ENCODE measurements at regions of chr12 and their contacts with region 1.

Region 1: DNA sequence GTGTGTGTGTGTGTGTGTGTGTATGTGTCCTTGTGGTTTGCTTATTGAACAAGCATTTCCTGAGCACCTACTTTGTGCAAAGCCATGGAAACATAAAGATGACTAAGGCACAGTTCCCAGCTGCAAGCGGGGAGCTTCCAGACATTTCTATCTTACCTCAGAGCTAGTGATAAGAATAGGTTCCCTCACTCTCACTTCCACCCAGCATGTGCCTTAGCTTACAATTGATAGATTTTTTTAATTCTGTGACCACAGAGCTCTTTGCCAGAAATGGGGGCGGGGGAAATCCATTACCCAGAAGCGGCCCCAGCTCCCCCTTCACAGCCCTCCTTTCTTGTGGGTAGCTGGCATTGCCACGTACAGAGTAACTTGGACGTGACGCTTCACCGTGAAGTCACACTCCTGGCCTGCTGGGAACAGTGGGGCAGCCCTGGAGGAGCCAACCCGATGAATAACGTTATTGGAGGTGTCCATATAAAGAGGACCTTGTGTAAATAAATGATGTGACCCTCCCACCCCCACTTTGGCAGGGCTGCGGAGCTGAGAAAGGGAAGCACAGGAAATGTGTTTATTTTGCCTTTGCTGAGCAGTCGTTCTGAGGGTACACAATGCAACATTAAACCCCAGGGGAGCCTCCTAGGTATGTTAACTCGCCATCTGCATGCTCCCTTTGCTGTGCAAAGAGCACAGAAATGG is 238.9 kb downstream of the CHST11 start:
- DNase-seq: peak; percentile 70
- H3K4me3 Mint-ChIP-seq: peak overlapping the region; percentile 53
- H3K27ac Mint-ChIP-seq: peak overlapping the region; percentile 94
- H3K4me1 Mint-ChIP-seq: peaks cover 84% of the 10 kb centered on the region
- H3K27me3 Mint-ChIP-seq: no peaks in the 10 kb centered on the region

Region 2: GRCh38 chr12:104569346-104570173 is 126.0 kb before region 1 on chr12:
- intact Hi-C with region 1: loop called (anchors 1 kb)
- DNase-seq: peak; percentile 58
- H3K4me3 Mint-ChIP-seq: peak overlapping the region; percentile 64
- H3K27ac Mint-ChIP-seq: peak overlapping the region; percentile 89
- H3K4me1 Mint-ChIP-seq: peaks cover 63% of the 10 kb centered on the region
- H3K27me3 Mint-ChIP-seq: no peaks in the 10 kb centered on the region

Region 3: GRCh38 chr12:104582739-104583138 is 112.9 kb before region 1 on chr12:
- intact Hi-C with region 1: no loop called
- DNase-seq: no peak
- H3K4me3 Mint-ChIP-seq: no peak overlapping the region
- H3K27ac Mint-ChIP-seq: no peak overlapping the region
- H3K4me1 Mint-ChIP-seq: peaks cover 83% of the 10 kb centered on the region
- H3K27me3 Mint-ChIP-seq: no peaks in the 10 kb centered on the region

Region 4: DNA sequence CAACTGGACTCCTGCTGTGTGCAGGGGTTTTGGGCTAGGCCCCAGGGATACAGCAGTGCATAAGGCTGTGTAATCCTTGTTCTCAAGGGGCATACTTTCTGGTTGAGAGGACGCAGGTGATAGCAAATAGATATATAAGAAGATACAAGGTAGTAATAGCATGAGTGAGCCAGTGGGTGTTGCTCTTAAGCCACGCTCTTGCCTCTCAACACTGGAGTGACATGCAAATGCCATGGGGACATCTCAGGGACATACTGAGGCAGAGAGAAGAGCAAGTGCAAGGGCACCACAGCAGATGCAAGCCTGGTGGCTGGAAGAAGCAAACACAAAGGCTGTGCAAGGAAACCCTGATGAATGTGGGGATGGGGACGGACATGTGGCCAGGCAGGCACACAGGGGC is 15.5 kb before region 1 on chr12:
- intact Hi-C with region 1: loop called (anchors 1 kb)
- DNase-seq: no peak
- H3K4me3 Mint-ChIP-seq: no peak overlapping the region
- H3K27ac Mint-ChIP-seq: peak overlapping the region; percentile 85
- H3K4me1 Mint-ChIP-seq: peaks cover 84% of the 10 kb centered on the region
- H3K27me3 Mint-ChIP-seq: no peaks in the 10 kb centered on the region

Region 5: DNA sequence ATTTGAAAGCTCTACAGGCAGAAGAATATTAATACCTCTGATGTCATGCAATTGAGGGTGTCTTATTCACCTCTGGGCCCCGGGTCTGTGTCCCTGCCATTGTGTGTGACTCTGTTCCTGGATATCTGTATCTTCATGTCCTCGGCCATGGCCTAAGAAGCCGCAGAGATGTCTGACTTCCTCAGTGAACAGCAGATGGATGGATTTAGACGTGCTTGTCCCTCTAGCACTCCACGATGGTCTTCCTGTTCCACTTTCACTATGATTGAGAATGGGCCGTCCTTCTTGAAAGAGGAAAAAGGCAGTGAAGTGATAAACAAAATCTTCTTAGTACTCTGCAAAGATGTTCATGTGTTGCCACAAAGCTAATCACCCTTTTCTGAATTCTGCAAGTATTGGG is 45.1 kb after region 1 on chr12:
- intact Hi-C with region 1: loop called (anchors 2 kb)
- DNase-seq: peak; percentile 40
- H3K4me3 Mint-ChIP-seq: peak overlapping the region; percentile 71
- H3K27ac Mint-ChIP-seq: peak overlapping the region; percentile 82
- H3K4me1 Mint-ChIP-seq: peaks cover 75% of the 10 kb centered on the region
- H3K27me3 Mint-ChIP-seq: no peaks in the 10 kb centered on the region

Region 6: DNA sequence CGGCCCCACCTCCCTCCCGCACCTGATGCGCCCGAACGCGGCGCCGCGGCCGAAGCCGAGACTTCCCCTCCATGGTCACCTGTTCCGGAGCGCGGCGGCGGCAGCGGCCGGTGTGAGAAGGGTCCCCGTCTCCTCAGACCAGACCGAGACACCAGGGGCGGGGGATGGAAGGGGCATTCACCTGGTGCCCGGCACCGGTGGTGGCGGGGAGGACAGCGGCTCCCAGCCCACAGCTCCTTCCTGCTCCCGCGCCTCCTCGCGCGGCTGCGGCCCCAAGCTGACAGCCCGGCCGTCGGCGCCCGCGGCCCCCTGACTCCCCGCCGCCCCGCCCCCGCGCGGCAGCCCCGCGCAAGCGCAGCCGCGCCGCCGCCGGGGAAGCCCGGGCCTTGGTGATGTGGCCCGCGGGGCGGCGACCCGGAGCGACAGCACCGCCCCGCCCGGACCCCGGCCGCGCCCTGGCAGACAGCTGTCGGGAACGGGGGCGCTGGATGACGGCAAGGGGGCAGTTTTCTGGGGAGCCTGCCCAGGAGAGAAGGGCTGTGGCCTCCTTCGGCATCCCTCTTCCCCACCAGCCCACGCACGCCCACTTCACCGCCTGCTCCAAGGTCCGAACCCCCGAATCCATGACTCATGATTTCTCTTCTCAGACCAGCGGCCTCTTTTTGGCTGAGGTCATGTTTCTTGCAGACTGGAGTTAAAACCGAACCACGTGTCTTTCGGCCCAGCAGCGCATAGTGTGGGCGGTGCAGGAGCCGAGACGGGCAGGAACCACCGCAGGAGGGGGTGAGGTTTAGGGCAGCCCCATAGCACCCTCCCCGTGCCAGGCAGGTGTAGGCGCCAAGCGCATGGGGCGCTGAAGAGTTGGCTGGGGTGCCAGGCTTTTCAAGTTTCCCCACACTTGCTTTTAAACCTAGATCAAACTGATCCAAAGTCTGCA is 262.7 kb after region 1 on chr12 and contains the start of gene SLC41A2:
- intact Hi-C with region 1: loop called (anchors 2 kb)
- DNase-seq: peak; percentile 80
- H3K4me3 Mint-ChIP-seq: peak within 1 kb of the TSS; percentile 90
- H3K27ac Mint-ChIP-seq: peak within 1 kb of the TSS; percentile 96
- H3K4me1 Mint-ChIP-seq: peaks cover 44% of the 10 kb centered on the region
- H3K27me3 Mint-ChIP-seq: peaks cover 24% of the 10 kb centered on the region
- total RNA-seq, gene SLC41A2: 16.4 and 19.0 TPM in 2 replicates

Region 7: GRCh38 chr12:105226219-105226618 is 530.6 kb after region 1 on chr12:
- intact Hi-C with region 1: loop called (anchors 5 kb)
- DNase-seq: peak; percentile 24
- H3K4me3 Mint-ChIP-seq: peak overlapping the region; percentile 43
- H3K27ac Mint-ChIP-seq: no peak overlapping the region
- H3K4me1 Mint-ChIP-seq: peaks cover 71% of the 10 kb centered on the region
- H3K27me3 Mint-ChIP-seq: no peaks in the 10 kb centered on the region

Measured in activated T-helper 1 cell treated with anti-CD3 and anti-CD28 coated beads, Interleukin-12 subunit alpha, Interleukin-12 subunit beta, Interleukin-2, Interleukin-4 antibody, amounts not matched to agents 30 ng/mL and 10 ng/mL and 1 ng/mL, durations not matched to agents 14 hours and 24 hours and 36 hours (primary cell).